Prostate gland (tissue), 2 donors: ENCODE measurements at regions of chr1 and their contacts with region 1.

Region 1: GRCh38 chr1:36149237-36149972 is at the start of gene TRAPPC3:
- DNase-seq: peak; percentile 100
- H3K4me3 ChIP-seq: peak within 1 kb of the TSS; percentile 75 to 84
- H3K27ac ChIP-seq: peak within 1 kb of the TSS; percentile 93 to 98
- H3K4me1 ChIP-seq: peaks cover 20% of the 10 kb centered on the region
- H3K27me3 ChIP-seq: no peaks in the 10 kb centered on the region
- CTCF ChIP-seq: peak; percentile 78 to 100 (median 100)
- POLR2A ChIP-seq: peak; percentile 95
- total RNA-seq, gene TRAPPC3: 90.0 to 92.5 TPM

Region 2: DNA sequence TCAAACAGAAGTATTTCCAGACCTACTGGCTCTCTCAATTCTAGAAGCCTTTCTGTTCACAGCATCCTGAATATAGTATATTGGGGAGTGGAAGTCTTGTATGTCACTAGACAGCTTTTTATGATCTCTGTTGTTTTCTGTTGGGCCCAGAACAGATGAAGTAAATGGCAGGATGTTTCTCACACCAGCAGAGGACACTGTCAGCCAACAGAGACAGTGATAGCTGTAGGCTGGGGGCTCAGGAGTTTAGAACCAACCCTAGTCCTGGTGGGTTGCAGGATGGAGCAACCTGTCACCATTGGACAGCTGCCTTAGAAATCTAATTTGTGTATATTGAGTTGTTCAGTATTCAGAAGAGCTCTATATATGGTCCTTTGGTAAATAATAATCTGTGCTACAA is 249.5 kb before region 1 on chr1:
- intact Hi-C with region 1: no loop called
- DNase-seq: no peak
- H3K4me3 ChIP-seq: no peak overlapping the region
- H3K27ac ChIP-seq: no peak overlapping the region
- H3K4me1 ChIP-seq: no peaks in the 10 kb centered on the region
- H3K27me3 ChIP-seq: no peaks in the 10 kb centered on the region
- CTCF ChIP-seq: no peak
- POLR2A ChIP-seq: no peak

Region 3: GRCh38 chr1:36187800-36188593 is 38.6 kb after region 1 on chr1:
- intact Hi-C with region 1: loop called (anchors 1 kb)
- DNase-seq: peak; percentile 89
- H3K4me3 ChIP-seq: no peak overlapping the region
- H3K27ac ChIP-seq: peak overlapping the region; percentile 81 to 90
- H3K4me1 ChIP-seq: peaks cover 11% of the 10 kb centered on the region
- H3K27me3 ChIP-seq: no peaks in the 10 kb centered on the region
- CTCF ChIP-seq: peak; percentile 51 to 97 (median 95)
- POLR2A ChIP-seq: no peak

Region 4: GRCh38 chr1:36203554-36204346 is 54.3 kb after region 1 on chr1:
- intact Hi-C with region 1: no loop called
- DNase-seq: no peak
- H3K4me3 ChIP-seq: no peak overlapping the region
- H3K27ac ChIP-seq: peak overlapping the region; percentile 72 to 82
- H3K4me1 ChIP-seq: peaks cover 12% of the 10 kb centered on the region
- H3K27me3 ChIP-seq: no peaks in the 10 kb centered on the region
- CTCF ChIP-seq: no peak
- POLR2A ChIP-seq: no peak

Region 5: GRCh38 chr1:36223993-36224536 is 74.7 kb after region 1 on chr1 and contains the start of gene THRAP3:
- intact Hi-C with region 1: loop called (anchors 1 kb)
- DNase-seq: peak; percentile 100
- H3K4me3 ChIP-seq: peak within 1 kb of the TSS; percentile 66 to 68
- H3K27ac ChIP-seq: peak within 1 kb of the TSS; percentile 98
- H3K4me1 ChIP-seq: peaks cover 11% of the 10 kb centered on the region
- H3K27me3 ChIP-seq: no peaks in the 10 kb centered on the region
- CTCF ChIP-seq: peak in 1 of 4 experiments; percentile 3
- POLR2A ChIP-seq: peak; percentile 94
- total RNA-seq, gene THRAP3: 100 to 123 TPM

Region 6: GRCh38 chr1:36420836-36421664 is 271.6 kb after region 1 on chr1:
- intact Hi-C with region 1: loop called (anchors 10 kb)
- DNase-seq: peak; percentile 84
- H3K4me3 ChIP-seq: no peak overlapping the region
- H3K27ac ChIP-seq: no peak overlapping the region
- H3K4me1 ChIP-seq: no peaks in the 10 kb centered on the region
- H3K27me3 ChIP-seq: no peaks in the 10 kb centered on the region
- CTCF ChIP-seq: peak; percentile 70 to 95 (median 86)
- POLR2A ChIP-seq: no peak